ENCODE measurements at regions of chr17 and their contacts with region 1.

Region 1: DNA sequence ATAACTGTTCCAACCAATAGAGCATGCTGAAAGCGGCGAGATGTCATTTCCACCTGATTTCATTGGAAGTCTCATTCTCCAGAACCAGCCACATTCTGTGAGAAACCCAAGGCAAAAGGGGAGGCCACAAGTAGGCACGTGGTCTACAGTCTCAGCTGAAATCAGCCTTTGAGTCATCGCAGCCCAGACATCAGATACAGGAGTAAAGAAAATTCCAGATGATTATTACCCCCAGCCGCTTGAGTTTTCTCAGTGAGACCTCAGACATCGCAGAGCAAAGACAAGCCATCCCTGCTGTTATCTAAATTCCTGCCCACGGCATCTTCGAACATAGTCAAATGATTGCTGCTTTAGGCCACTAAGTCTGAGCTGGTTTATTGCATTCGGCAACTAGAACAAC is 23.1 kb downstream of the STAT3 start:
- DNase-seq: no peak
- H3K4me3 ChIP-seq: no peak overlapping the region
- H3K27ac ChIP-seq: peak overlapping the region; percentile 31
- H3K27me3 ChIP-seq: no peaks in the 10 kb centered on the region
- CTCF ChIP-seq: no peak

Region 2: GRCh38 chr17:42118545-42118944 is 246.6 kb before region 1 on chr17:
- CTCF ChIA-PET with region 1: no interaction called
- POLR2A ChIA-PET with region 1: interaction called, 15 read pairs
- DNase-seq: no peak
- H3K4me3 ChIP-seq: no peak overlapping the region
- H3K27ac ChIP-seq: no peak overlapping the region
- H3K27me3 ChIP-seq: no peaks in the 10 kb centered on the region
- CTCF ChIP-seq: peak; percentile 51

Region 3: DNA sequence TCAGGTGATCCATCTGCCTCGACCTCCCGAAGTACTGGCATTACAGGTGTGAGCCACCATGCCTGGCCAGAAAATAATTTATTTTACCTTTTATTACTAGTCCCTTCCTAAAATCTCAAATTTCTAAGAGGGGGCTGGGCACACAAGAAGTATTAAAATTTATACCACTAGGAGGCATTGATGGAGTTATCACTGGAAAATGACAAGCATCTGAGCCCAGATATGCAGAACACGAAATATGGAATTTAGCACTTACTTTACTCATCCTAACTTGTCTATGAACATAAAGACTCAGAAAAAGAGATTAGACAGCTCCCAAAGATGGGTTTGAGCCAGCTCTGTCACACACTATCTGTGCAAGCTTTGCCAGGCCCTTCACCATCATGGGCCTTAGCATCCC is 30.5 kb before region 1 on chr17:
- CTCF ChIA-PET with region 1: no interaction called
- POLR2A ChIA-PET with region 1: no interaction called
- DNase-seq: no peak
- H3K4me3 ChIP-seq: no peak overlapping the region
- H3K27ac ChIP-seq: no peak overlapping the region
- H3K27me3 ChIP-seq: no peaks in the 10 kb centered on the region
- CTCF ChIP-seq: 0 out of 2 replicates have a peak, but pooled peaks have one; percentile 22